ENCODE measurements at regions of chr2 and their contacts with region 1.

Region 1: DNA sequence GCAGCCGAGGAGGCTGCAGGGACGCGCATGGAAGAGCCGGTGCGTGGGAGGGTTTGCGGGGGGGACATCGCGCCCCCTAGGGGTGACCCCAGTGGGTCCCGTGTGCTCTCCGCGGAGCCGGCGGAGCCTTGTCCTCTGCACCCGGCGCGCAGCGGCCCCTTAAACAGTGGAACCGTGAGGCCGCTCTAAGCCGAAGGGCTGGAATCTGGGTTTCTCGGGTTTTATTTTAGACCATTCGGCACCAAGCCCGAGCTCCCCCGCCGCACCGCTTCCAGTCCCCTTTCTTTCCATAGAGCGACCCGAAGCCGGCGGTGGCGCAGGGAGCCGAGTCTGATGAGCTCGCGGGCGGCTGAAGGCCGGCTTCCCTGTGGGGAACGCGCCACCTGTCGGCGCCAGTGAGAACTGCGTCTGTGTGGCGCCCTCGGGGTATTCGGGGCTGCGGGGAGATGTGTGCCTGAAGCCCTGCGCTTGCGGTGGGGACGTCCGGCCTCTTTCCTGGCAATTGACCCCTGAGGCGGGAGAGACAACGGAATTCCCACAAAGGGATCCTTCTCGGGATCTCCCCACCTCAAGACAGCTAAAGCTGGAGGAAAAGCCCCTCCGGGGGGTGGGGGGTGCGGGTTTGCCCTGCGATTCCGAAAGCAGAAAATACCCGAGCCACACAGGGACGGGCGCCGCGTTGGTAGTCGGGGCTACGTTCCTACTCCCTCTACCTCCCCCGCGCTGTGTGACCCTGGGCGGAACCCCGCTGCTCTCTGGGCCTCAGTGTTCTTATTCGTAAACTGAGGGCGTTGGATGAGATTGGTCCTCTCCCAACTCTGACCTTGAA is 8.2 kb upstream of the EN1 start:
- DNase-seq: peak; percentile 90
- ATAC-seq: peak; percentile 91

Region 2: GRCh38 chr2:118202707-118203303 is 652.9 kb before region 1 on chr2:
- intact Hi-C with region 1: loop called (anchors 5 kb)
- DNase-seq: no peak
- ATAC-seq: peak; percentile 52

Region 3: GRCh38 chr2:118221666-118222594 is 633.7 kb before region 1 on chr2:
- intact Hi-C with region 1: loop called (anchors 2 kb)
- DNase-seq: no peak
- ATAC-seq: peak; percentile 56

Measured in Right ventricle myocardium inferior (tissue), 1 donor.